ENCODE measurements at regions of chr11 and their contacts with region 1.

Region 1: GRCh38 chr11:10933455-10934292 is 75.8 kb upstream of the ZBED5 start:
- DNase-seq: peak; percentile 85
- ATAC-seq: peak; percentile 81
- H3K4me3 ChIP-seq: peak overlapping the region; percentile 40 to 63
- H3K27ac ChIP-seq: peak overlapping the region; percentile 60
- H3K4me1 ChIP-seq: peaks cover 9 to 39% of the 10 kb centered on the region in 2 experiments
- H3K27me3 ChIP-seq: no peaks in the 10 kb centered on the region
- CTCF ChIP-seq: peak; percentile 94 to 98 (median 97)
- POLR2A ChIP-seq: no peak
- RAD21 ChIP-seq: peak; percentile 96

Region 2: DNA sequence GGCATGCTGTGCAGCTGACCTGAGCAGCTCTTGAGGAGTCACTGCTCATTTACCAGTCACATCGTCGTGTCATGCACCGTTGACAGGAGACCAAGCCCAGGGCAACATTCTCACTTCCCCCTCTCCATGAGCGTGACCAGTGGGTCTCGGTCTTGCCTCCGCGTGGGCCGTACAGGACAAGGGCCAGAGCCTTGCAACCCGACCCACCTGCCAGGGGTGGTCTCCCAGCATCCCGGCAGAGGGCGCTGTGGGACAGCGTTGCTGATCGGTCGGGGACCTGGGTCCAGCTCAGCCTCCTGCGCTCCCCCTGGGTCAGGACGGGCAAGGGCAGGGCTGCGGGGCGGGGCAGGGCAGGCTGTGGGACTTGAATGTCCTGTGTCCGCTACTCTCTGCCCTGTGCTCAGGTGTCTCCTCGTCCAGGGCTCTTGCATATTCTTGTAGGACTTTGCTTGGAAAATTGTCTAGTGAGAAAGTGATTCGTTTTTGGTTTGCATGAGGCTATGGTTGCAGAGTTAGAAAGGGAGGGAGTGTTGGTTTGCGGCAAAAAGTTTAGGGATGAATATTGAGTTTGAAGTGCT is 141.2 kb before region 1 on chr11:
- CTCF ChIA-PET with region 1: interaction called, 10 read pairs
- POLR2A ChIA-PET with region 1: no interaction called
- RAD21 ChIA-PET with region 1: interaction called, 3 to 12 read pairs
- intact Hi-C with region 1: loop called (anchors 1 kb)
- DNase-seq: peak; percentile 72
- ATAC-seq: peak; percentile 99
- H3K4me3 ChIP-seq: no peak overlapping the region
- H3K27ac ChIP-seq: no peak overlapping the region
- H3K4me1 ChIP-seq: peaks cover 0 to 8% of the 10 kb centered on the region in 2 experiments; a peak in 3 of 4 replicates
- H3K27me3 ChIP-seq: no peaks in the 10 kb centered on the region
- CTCF ChIP-seq: peak; percentile 91 to 95 (median 95)
- POLR2A ChIP-seq: no peak
- RAD21 ChIP-seq: peak; percentile 99

Region 3: DNA sequence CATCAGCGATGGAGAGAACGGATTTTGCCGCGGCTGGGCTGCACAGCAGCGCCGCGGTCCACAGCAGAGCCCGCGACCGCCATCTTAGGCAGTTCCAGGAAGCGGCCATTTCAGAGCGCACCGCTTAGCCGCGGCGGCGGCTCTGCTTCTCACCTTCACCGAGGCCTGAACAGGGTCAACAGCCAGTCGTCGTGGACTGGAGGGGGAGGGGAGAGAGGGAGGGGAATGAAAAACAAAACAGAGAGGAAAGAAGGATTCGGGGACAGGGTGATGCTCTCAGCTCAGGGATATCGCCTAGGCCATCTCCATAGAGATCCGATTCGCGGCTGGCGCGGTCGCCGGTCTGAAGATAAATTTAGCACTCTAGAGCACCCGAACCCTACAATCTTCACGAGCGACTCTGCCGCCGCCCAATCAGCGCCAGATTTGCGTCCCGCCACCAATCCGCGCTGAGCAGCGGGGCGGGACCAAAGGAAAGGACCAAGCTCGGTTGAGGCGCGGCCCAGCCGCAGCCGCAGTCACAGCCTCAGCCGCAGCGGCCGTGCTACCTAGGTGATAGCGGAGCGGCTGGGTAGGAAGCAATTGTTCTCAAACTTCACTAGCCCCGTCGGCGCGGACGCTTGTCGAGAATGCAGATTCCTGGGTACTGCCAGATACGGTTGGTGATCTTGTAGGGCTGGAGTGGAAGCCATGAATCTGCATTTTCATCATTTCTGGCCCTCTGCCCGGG is 75.8 kb before region 1 on chr11 and contains the start of gene ZBED5:
- CTCF ChIA-PET with region 1: interaction called, 6 read pairs
- POLR2A ChIA-PET with region 1: no interaction called
- RAD21 ChIA-PET with region 1: no interaction called
- intact Hi-C with region 1: loop called (anchors 5 kb)
- DNase-seq: peak; percentile 94
- ATAC-seq: peak; percentile 92
- H3K4me3 ChIP-seq: peak within 1 kb of the TSS; percentile 86 to 91
- H3K27ac ChIP-seq: peak within 1 kb of the TSS; percentile 91
- H3K4me1 ChIP-seq: peaks cover 0 to 21% of the 10 kb centered on the region in 2 experiments; a peak in 2 of 4 replicates
- H3K27me3 ChIP-seq: no peaks in the 10 kb centered on the region
- CTCF ChIP-seq: no peak
- POLR2A ChIP-seq: peak; percentile 84
- RAD21 ChIP-seq: peak; percentile 31; the same call in 1 of the 2 replicates
- total RNA-seq, gene ZBED5: 26.8 TPM

Region 4: GRCh38 chr11:11010624-11011127 is 77.0 kb after region 1 on chr11:
- CTCF ChIA-PET with region 1: interaction called, 56 read pairs
- POLR2A ChIA-PET with region 1: interaction called, 4 read pairs
- RAD21 ChIA-PET with region 1: interaction called, 8 to 19 read pairs
- intact Hi-C with region 1: no loop called
- DNase-seq: peak; percentile 45
- ATAC-seq: peak; percentile 98
- H3K4me3 ChIP-seq: peak overlapping the region; percentile 18 to 44
- H3K27ac ChIP-seq: no peak overlapping the region
- H3K4me1 ChIP-seq: peaks cover 3 to 11% of the 10 kb centered on the region in 2 experiments; a peak in 3 of 4 replicates
- H3K27me3 ChIP-seq: no peaks in the 10 kb centered on the region
- CTCF ChIP-seq: peak; percentile 47 to 67 (median 66); a peak in 4 of 6 replicates
- POLR2A ChIP-seq: no peak
- RAD21 ChIP-seq: peak; percentile 64

Region 5: DNA sequence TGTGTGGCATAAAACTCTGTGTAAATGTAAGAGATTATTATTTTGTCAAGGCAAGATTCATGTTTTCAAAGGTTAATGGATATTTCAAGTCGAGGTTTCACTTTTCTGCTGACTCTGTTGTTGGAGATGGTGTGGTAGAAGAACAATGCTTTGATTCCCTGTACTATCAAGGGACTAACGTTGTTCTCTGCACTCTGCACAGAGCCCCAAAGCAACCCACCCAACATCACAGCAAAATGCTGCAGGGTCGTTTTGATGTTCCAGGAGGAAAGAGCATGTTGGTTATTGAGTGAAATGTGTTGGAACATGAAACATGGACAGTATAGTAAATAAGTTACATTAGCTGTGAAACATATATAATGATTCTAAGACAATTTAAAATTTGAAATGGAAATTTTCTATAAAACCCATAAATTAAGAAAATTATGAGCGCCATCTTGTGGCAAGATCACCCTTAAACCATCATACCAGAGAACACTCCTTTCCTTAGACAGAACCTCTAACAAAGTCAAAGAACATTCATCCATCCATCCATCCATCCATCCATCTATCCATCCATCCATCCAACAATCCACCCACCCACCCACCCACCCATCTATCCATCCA is 88.6 kb after region 1 on chr11:
- CTCF ChIA-PET with region 1: interaction called, 42 read pairs
- POLR2A ChIA-PET with region 1: interaction called, 5 read pairs
- RAD21 ChIA-PET with region 1: interaction called, 8 to 13 read pairs
- intact Hi-C with region 1: loop called (anchors 1 kb)
- DNase-seq: peak; percentile 12
- ATAC-seq: peak; percentile 72
- H3K4me3 ChIP-seq: no peak overlapping the region
- H3K27ac ChIP-seq: no peak overlapping the region
- H3K4me1 ChIP-seq: 0 out of 4 replicates have a peak, but pooled peaks cover 0 to 3% of the 10 kb centered on the region in 2 experiments
- H3K27me3 ChIP-seq: no peaks in the 10 kb centered on the region
- CTCF ChIP-seq: peak; percentile 21 to 62 (median 45); a peak in 4 of 6 replicates
- POLR2A ChIP-seq: no peak
- RAD21 ChIP-seq: peak; percentile 78

Region 6: DNA sequence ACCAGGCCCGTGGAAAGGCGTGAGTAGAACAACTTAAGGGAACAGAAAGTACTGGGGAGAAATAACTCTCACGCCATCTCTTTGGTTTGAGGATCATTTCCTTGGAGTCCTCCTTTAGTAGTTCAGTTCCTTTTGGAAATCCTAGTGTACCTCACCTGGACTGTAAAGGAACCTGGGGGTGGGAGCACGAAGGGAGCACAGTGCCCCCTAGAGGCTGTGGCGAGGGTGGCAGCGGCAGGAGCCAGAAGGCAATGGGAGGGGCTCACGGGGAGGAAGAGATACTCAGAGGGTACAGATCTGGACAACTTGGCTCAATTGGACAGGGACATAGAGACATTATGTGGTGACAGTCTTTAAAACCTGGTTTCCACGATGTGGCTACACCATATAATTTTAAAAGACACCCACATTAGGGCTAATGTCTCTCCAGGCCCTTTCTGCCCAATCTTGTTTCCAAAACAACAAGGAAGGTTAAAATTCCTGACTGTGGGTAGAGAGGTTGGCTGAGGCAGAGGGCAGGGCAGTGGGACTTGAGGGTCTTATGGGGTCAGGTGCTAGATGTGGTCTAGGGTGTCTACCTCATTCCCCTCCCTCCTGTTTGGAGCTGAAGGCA is 332.4 kb after region 1 on chr11:
- CTCF ChIA-PET with region 1: interaction called, 3 read pairs
- POLR2A ChIA-PET with region 1: no interaction called
- RAD21 ChIA-PET with region 1: no interaction called
- intact Hi-C with region 1: loop called (anchors 2 kb)
- DNase-seq: peak; percentile 16
- ATAC-seq: peak; percentile 96
- H3K4me3 ChIP-seq: no peak overlapping the region
- H3K27ac ChIP-seq: no peak overlapping the region
- H3K4me1 ChIP-seq: peaks cover 4 to 29% of the 10 kb centered on the region in 2 experiments; a peak in 2 of 4 replicates
- H3K27me3 ChIP-seq: no peaks in the 10 kb centered on the region
- CTCF ChIP-seq: peak; percentile 67 to 99 (median 98); a peak in 5 of 6 replicates
- POLR2A ChIP-seq: no peak
- RAD21 ChIP-seq: peak; percentile 77

Region 7: DNA sequence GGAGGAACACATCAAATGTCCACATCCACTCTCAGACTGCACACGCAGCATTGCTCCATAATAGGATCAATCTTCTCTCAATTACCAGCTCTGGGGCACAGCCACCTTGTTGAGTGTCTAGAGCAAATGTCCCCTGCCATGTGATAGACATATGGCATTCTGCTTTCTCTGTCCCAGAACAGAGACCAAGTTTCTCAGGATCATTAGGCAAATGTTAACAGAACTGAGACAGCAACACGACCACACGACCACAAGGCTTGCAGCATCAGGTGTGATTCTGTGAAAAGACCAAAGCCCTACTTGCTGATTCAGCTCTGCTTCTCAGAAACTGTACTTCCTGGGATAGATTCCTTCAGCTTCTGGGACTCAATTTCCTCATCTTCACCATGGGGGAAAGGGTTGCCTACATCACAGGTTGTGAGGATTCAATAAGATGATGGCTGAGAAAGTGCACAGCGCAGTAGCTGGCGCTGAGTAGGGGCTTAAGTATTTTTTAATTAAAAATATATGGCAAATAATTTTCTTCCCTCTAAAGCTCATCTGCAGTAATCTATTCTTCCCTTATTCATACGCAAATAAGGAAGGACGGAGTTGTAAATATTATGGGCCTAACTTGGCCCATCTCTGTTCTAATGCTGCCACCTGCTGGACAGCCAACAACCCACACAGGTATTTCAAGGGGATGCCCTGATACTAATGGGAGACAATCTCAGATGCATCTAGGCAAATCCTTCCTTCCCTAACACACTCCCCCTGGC is 853.8 kb after region 1 on chr11:
- CTCF ChIA-PET with region 1: interaction called, 18 read pairs
- POLR2A ChIA-PET with region 1: interaction called, 3 read pairs
- RAD21 ChIA-PET with region 1: no interaction called
- intact Hi-C with region 1: loop called (anchors 1 kb)
- DNase-seq: peak; percentile 38
- ATAC-seq: peak; percentile 93
- H3K4me3 ChIP-seq: no peak overlapping the region
- H3K27ac ChIP-seq: no peak overlapping the region
- H3K4me1 ChIP-seq: no peaks in the 10 kb centered on the region
- H3K27me3 ChIP-seq: no peaks in the 10 kb centered on the region
- CTCF ChIP-seq: peak; percentile 81 to 91 (median 87)
- POLR2A ChIP-seq: no peak
- RAD21 ChIP-seq: peak; percentile 96